Mammary epithelial cell (primary cell): ENCODE measurements at regions of chr14 and their contacts with region 1.

Region 1: DNA sequence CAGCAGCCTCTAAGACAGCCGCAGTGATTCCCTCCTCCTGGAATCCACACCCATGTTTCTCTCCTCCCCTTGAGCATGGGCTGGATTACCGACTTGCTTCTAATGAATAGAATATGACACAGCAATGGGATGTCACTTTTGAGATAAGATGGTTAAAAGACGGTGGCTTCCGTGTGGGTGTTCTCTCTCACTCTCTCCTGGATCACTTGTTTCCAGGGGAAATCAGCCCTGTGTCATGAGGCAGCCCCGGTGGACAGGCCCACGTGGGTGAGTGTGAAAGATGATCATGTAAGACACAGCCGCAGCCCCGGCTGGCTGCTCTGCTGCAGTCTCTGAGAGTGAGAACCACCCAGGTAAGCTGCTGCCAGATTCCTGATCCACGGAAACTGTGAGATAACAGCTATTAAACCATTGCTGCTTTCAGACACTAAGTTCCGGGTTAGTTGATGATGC is 10.7 kb downstream of the MOAP1 start:
- DNase-seq: peak; percentile 51
- H3K4me3 ChIP-seq: no peak overlapping the region
- H3K27ac ChIP-seq: no peak overlapping the region
- H3K4me1 ChIP-seq: no peaks in the 10 kb centered on the region
- H3K27me3 ChIP-seq: no peaks in the 10 kb centered on the region
- CTCF ChIP-seq: no peak

Region 2: GRCh38 chr14:92945959-92946846 is 227.8 kb before region 1 on chr14:
- CTCF ChIA-PET with region 1: no interaction called
- dilution Hi-C with region 1: no loop called
- in situ Hi-C with region 1: no loop called
- intact Hi-C with region 1: no loop called
- DNase-seq: peak; percentile 48
- H3K4me3 ChIP-seq: no peak overlapping the region
- H3K27ac ChIP-seq: no peak overlapping the region
- H3K4me1 ChIP-seq: peaks cover 9% of the 10 kb centered on the region
- H3K27me3 ChIP-seq: no peaks in the 10 kb centered on the region
- CTCF ChIP-seq: no peak

Region 3: GRCh38 chr14:93219103-93219726 is 45.2 kb after region 1 on chr14:
- CTCF ChIA-PET with region 1: no interaction called
- dilution Hi-C with region 1: no loop called
- in situ Hi-C with region 1: no loop called
- intact Hi-C with region 1: loop called (anchors 5 kb)
- DNase-seq: peak; percentile 51
- H3K4me3 ChIP-seq: no peak overlapping the region
- H3K27ac ChIP-seq: no peak overlapping the region
- H3K4me1 ChIP-seq: no peaks in the 10 kb centered on the region
- H3K27me3 ChIP-seq: no peaks in the 10 kb centered on the region
- CTCF ChIP-seq: peak; percentile 75 to 78